Activated B cell treated with CpG ODN at 0.5 μM for 24 hours (primary cell): ENCODE measurements at regions of chr10 and their contacts with region 1.

Region 1: DNA sequence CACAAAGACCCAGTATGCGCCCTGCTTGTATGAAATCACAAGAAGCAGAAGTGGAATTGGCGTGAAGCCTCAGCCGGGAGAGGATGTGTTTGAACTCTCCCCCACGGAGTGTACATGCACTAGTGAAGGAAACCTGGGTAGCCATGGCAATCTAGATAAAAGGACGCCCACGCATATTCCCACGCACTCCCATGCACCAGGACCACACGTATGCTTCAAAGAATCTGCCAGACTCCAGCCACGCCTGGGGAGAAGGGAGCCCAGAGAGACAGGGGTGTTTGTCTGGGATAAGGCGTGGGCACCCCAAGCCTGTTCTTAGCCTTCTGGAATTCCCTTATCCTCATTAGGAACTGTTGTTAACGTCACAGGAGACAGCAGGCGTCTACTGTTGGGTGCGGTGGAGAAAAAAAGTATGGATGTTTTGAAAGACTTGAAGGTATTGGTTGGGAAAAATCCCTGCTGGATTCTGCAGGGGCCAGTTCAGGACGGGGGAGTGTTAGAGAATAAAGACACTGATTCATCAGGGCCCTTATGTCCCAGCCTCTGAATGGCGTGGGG is 28.9 kb upstream of the ECHDC3 start:
- DNase-seq: no peak
- ATAC-seq: peak; percentile 27
- H3K4me3 Mint-ChIP-seq: no peak overlapping the region
- H3K27ac Mint-ChIP-seq: no peak overlapping the region
- H3K4me1 Mint-ChIP-seq: peaks cover 56% of the 10 kb centered on the region
- H3K27me3 Mint-ChIP-seq: no peaks in the 10 kb centered on the region
- CTCF ChIP-seq: no peak

Region 2: DNA sequence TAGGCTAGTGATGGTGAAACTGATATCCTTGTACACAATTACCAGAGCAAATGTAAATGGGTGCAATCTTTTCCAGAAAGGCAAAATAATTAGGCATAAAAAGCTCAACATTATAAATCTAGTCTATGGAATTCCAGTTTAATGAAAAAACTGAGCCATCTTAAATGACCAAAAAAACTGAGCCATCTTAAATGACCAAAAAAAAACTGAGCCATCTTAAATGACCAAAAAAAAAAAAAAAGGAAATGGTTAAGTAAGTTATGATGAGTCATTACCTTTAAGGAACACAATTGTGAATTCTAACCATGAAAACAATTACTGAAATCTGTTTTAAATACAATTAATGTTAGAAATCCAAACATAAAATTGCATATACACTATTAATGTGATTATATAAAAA is 127.1 kb before region 1 on chr10:
- CTCF ChIA-PET with region 1: no interaction called
- POLR2A ChIA-PET with region 1: no interaction called
- intact Hi-C with region 1: no loop called
- DNase-seq: no peak
- ATAC-seq: no peak
- H3K4me3 Mint-ChIP-seq: no peak overlapping the region
- H3K27ac Mint-ChIP-seq: peak overlapping the region; percentile 59
- H3K4me1 Mint-ChIP-seq: peaks cover 71% of the 10 kb centered on the region
- H3K27me3 Mint-ChIP-seq: no peaks in the 10 kb centered on the region
- CTCF ChIP-seq: no peak

Region 3: GRCh38 chr10:11647676-11648075 is 65.6 kb before region 1 on chr10:
- CTCF ChIA-PET with region 1: no interaction called
- POLR2A ChIA-PET with region 1: no interaction called
- intact Hi-C with region 1: no loop called
- DNase-seq: no peak
- ATAC-seq: no peak
- H3K4me3 Mint-ChIP-seq: no peak overlapping the region
- H3K27ac Mint-ChIP-seq: no peak overlapping the region
- H3K4me1 Mint-ChIP-seq: peaks cover under 1% of the 10 kb centered on the region
- H3K27me3 Mint-ChIP-seq: no peaks in the 10 kb centered on the region
- CTCF ChIP-seq: no peak

Region 4: DNA sequence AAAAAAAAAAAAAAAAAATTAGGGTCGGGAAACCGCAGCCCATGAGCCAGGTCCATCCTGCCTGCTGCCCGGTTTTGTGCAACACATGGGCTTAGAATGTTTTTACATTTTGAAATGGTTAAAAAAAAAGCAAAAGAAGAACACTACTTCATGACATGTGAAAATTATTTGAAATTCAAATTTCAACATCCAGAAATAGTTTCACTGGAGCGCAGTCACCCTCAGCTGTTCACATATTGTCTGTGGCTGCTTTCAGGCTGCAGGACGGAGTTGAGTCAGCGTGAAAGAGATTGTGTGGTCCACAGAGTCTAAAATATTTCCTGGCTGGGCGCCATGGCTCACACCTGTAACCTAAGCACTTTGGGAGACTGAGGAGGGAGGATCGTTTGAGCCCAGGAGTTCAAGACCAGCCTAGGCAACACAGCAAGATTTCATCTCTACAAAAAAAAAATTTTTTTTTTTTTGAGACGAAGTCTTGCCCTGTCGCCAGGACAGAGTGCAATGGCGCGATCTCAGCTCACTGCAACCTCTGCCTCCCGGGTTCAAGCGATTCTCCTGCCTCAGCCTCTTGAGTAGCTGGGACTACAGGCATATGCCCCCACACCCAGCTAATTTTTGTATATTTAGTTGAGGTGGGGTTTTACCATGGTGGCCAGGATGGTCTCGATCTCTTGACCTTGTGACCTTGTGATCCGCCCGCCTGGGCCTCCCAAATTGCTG is 35.0 kb before region 1 on chr10:
- CTCF ChIA-PET with region 1: interaction called, 4 read pairs
- POLR2A ChIA-PET with region 1: interaction called, 5 read pairs
- intact Hi-C with region 1: loop called (anchors 5 kb)
- DNase-seq: peak; percentile 51
- ATAC-seq: peak; percentile 80
- H3K4me3 Mint-ChIP-seq: peak overlapping the region; percentile 77
- H3K27ac Mint-ChIP-seq: peak overlapping the region; percentile 94
- H3K4me1 Mint-ChIP-seq: peaks cover 94% of the 10 kb centered on the region
- H3K27me3 Mint-ChIP-seq: no peaks in the 10 kb centered on the region
- CTCF ChIP-seq: no peak

Region 5: DNA sequence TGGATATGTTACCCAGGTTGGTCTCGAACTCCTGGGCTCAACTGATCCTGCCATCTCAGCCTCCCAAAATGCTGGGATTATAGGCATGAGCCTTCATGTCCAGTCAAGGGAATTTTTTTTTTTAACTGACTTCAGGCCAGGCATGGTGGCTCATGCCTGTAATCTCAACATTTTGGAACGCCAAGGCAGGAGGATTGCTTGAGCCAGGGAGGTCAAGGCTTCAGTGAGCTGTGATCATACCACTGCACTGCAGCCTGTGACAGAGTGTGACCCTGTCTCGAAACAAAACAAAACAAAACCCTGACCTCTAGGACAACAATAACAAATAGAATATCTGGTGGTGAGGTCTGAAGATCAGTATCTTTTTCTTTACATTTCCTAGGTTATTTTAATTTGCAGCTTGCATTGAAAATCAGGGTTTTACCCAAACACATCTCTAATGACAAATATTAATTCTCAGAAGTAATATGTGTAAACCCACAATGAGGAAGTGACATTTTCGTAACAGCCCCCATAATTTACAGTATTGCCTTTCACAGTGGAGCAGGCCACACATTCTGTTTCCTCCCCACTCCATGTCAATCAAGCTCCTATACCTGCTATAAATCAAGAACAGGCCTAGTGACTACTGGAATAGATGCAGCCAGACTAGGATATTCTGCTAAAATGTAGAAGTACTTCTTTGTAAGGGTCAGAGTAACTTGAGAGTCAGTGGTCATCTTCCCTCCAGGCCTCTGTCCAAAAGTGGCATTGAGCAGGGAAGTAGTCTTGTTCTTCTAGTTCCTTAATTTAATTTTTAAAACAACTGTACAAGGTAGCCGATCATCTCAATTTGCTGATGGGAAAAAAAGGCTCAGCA is 14.3 kb before region 1 on chr10:
- CTCF ChIA-PET with region 1: interaction called, 10 read pairs
- POLR2A ChIA-PET with region 1: interaction called, 7 read pairs
- intact Hi-C with region 1: loop called (anchors 1 kb)
- DNase-seq: no peak
- ATAC-seq: peak; percentile 84
- H3K4me3 Mint-ChIP-seq: peak overlapping the region; percentile 44
- H3K27ac Mint-ChIP-seq: peak overlapping the region; percentile 86
- H3K4me1 Mint-ChIP-seq: peaks cover 66% of the 10 kb centered on the region
- H3K27me3 Mint-ChIP-seq: no peaks in the 10 kb centered on the region
- CTCF ChIP-seq: no peak

Region 6: DNA sequence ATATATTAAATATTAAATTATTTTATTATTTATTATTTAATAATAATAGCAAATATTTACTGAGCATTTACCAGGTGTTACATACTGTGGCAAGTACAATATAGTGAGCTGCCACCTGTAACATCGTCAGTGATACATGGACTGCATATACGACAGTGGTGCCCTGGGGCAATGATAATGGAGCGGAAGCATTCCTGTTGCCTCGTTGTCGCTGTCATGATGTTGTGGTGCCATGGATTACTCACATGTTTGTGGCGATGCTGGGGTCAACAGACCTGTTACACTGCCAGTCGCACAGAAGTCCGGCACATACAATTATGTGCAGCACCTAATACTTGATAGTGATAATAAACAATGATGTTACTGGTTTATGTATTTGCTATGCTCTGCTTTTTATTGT is 656.7 kb after region 1 on chr10:
- CTCF ChIA-PET with region 1: no interaction called
- POLR2A ChIA-PET with region 1: no interaction called
- intact Hi-C with region 1: no loop called
- DNase-seq: no peak
- ATAC-seq: no peak
- H3K4me3 Mint-ChIP-seq: no peak overlapping the region
- H3K27ac Mint-ChIP-seq: no peak overlapping the region
- H3K4me1 Mint-ChIP-seq: peaks cover 47% of the 10 kb centered on the region
- H3K27me3 Mint-ChIP-seq: no peaks in the 10 kb centered on the region
- CTCF ChIP-seq: no peak

Region 7: DNA sequence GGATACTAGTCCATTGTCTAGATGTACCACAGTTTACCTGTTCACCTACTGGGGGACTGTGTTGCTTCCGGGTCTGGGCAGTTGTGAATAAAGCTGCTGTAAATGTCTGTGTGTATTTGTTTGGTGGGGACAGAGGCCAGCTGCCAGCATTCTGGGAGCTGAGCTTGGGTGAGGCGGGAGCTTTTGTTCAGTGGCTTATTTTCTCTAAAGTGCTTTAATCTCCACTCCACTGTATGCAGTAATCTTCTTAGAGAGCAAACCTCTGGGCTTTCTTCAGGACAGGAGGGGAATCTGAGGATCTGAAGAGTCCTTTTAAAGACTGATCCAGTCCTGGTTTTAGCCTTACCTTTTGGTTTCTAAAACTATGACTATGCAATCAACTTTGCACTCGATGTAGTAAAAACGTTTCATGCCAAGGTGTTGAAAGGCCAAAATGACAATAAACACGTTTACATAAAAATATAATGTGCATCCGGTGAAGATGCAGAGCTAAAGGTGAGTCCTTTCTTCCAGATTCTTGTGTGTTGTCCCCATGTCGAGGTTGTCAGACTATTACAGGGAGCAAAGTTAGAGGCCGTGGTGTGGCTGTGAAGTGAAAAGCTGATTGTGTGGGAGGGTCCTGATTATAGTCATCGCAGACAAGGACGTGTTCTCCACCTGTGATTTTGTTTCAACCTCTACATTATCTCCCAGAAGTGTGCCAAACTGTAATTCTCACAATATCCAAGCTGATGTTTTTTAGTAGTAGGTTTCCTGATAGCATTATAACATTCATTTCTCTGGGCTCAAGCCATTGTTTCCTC is 915.9 kb after region 1 on chr10:
- CTCF ChIA-PET with region 1: no interaction called
- POLR2A ChIA-PET with region 1: no interaction called
- intact Hi-C with region 1: no loop called
- DNase-seq: no peak
- ATAC-seq: no peak
- H3K4me3 Mint-ChIP-seq: no peak overlapping the region
- H3K27ac Mint-ChIP-seq: no peak overlapping the region
- H3K4me1 Mint-ChIP-seq: peaks cover 22% of the 10 kb centered on the region
- H3K27me3 Mint-ChIP-seq: no peaks in the 10 kb centered on the region
- CTCF ChIP-seq: no peak